ENCODE measurements at regions of chr6 and their contacts with region 1.

Region 1: GRCh38 chr6:4788953-4789584 is 12.9 kb downstream of the CDYL start:
- DNase-seq: no peak
- ATAC-seq: no peak
- H3K4me3 Mint-ChIP-seq: no peak overlapping the region
- H3K27ac Mint-ChIP-seq: no peak overlapping the region
- H3K4me1 Mint-ChIP-seq: peaks cover 19% of the 10 kb centered on the region
- H3K27me3 Mint-ChIP-seq: no peaks in the 10 kb centered on the region

Region 2: DNA sequence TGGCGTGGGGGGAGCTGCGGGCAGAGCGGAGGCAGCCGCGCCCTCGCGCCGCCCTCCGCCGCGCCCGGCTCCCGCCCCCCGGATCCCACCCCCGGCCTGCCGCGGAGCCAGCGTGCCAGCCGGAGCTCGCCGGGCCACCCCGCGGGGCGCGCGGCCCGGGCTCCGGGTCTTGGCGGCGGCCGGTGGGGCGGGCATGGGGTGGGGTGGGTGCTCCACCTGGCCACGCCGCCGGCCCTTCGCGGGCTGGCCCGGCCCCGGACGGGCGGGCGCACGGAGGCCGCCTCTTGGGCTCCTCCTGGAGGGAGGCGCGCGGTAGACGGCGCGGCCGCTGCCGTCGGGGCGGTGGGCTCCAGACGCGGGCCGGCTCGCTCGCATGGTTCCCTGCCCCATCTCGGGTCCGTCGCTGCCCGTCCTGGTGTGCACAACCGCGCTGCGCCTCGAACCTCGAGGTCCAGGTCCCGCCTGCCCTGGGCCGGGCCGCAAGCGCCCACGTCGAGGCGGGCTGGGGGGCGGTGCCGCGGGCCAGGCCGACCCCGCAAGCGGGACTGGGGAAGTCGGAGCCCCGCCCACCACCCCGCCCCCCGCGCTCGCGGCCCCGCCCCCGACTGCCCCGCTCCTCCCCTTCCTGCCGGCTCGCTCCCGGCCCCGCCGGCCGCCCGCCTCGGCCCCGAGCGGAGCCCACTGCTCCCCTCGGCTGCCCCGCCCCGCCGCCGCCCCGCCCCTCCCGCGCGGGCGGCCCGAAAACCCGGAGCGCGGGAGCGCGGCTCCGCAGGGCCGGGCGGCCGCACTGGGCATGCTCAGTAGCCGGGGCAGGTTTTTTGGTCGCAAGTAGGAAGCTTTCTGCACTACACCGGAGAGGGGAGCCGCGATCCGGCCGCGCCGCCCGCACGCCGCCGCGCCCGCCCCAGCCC is 13.2 kb before region 1 on chr6 and contains the start of gene CDYL:
- CTCF ChIA-PET with region 1: interaction called, 16 read pairs
- POLR2A ChIA-PET with region 1: interaction called, 9 read pairs
- DNase-seq: peak; percentile 89
- ATAC-seq: peak; percentile 83
- H3K4me3 Mint-ChIP-seq: peak within 1 kb of the TSS; percentile 83
- H3K27ac Mint-ChIP-seq: peak within 1 kb of the TSS; percentile 85
- H3K4me1 Mint-ChIP-seq: peaks cover 36% of the 10 kb centered on the region
- H3K27me3 Mint-ChIP-seq: peaks cover 24% of the 10 kb centered on the region
- total RNA-seq, gene CDYL: 32.5 to 36.3 TPM

Measured in activated CD8-positive, alpha-beta T cell treated with anti-CD3 and anti-CD28 coated beads, Interleukin-2, amount 10 ng/mL, durations not matched to agents 7 days and 5 days (primary cell).